ENCODE measurements at regions of chr2 and their contacts with region 1.

Region 1: GRCh38 chr2:71505086-71505769 is 51.9 kb downstream of the DYSF start:
- DNase-seq: peak; percentile 51
- H3K4me3 ChIP-seq: no peak overlapping the region
- H3K27ac ChIP-seq: peak overlapping the region; percentile 91
- H3K4me1 ChIP-seq: peaks cover 77% of the 10 kb centered on the region
- H3K27me3 ChIP-seq: no peaks in the 10 kb centered on the region
- CTCF ChIP-seq: no peak

Region 2: GRCh38 chr2:71460595-71461303 is 44.5 kb before region 1 on chr2:
- intact Hi-C with region 1: loop called (anchors 5 kb)
- DNase-seq: no peak
- H3K4me3 ChIP-seq: no peak overlapping the region
- H3K27ac ChIP-seq: peak overlapping the region; percentile 91
- H3K4me1 ChIP-seq: peaks cover 96% of the 10 kb centered on the region
- H3K27me3 ChIP-seq: no peaks in the 10 kb centered on the region
- CTCF ChIP-seq: peak; percentile 73

Measured in left ventricle myocardium inferior (tissue), 1 donor.